Esophagus muscularis mucosa (tissue), 4 donors: ENCODE measurements at regions of chr14 and their contacts with region 1.

Region 1: DNA sequence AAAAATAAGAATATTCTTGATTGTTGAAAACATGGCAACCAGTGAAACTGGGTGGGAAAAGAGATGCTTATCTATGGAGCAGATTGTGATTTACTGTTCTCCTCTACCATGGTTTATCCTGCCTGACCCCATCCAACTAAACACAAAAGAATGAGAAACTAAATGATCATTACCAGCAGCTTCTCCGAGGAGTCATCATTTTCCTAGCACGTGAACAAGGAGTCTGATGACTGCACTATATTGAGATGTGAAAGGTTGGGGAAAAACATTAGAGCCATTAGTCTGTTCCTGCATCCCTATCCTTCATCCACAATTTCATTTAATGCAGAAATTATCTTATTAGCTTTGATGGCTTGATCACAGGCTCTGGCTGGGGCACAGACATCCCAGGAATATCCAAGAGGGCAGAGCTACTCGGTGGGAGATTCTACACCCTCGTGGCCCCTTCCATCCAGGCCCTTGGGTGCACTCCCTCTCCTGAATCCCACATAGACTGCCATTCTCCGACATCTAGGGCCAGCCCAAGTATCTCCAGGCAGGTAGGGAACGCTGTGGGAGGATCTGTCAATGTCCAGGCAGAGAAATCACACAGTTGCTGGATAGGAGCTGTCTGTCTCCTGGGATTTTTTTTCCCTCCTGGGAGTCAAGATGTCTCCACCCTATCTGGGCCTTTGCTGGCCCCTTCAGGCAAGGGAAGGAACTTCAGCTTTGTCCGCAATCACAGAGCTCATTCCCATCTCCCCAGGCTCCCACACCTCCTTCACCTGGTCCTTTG is 43.3 kb upstream of the DHRS4 start:
- DNase-seq: no peak
- H3K4me3 ChIP-seq: no peak overlapping the region
- H3K27ac ChIP-seq: no peak overlapping the region
- H3K4me1 ChIP-seq: peaks cover 0 to under 1% (median 0%) of the 10 kb centered on the region in 4 donors
- H3K27me3 ChIP-seq: no peaks in the 10 kb centered on the region
- CTCF ChIP-seq: peak; percentile 56 to 86 (median 61)
- EP300 ChIP-seq: no peak
- POLR2A ChIP-seq: no peak

Region 2: DNA sequence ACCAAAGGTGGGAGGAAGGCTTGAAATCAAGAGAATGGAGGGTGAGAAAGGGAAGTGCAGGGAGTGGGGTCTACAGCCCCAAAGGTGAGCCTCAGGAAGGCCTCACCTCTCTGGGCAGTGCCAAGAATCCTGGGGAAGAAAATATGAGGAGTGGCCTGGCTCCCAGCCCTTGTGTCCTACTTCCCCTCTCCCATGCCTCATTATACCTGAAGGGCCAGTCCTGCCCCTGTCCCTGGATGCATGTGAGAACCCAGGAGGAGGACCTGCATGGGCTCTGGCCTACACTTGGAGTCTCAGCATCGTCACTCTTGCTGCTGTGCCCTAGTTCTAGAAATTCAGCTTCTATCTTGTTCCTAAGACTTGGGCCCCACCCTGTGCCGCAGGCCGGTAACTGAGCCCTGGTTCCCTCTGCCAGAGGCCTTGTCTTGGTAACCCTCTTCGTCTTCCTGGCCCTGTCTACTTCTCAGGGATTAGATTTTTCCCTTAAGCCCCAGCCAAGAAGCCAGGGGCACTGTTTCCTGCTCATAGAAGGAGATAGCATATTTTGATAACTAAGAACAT is 463.9 kb before region 1 on chr14:
- intact Hi-C with region 1: no loop called
- DNase-seq: no peak
- H3K4me3 ChIP-seq: no peak overlapping the region
- H3K27ac ChIP-seq: no peak overlapping the region
- H3K4me1 ChIP-seq: peaks cover 0 to 8% (median 0%) of the 10 kb centered on the region in 4 donors
- H3K27me3 ChIP-seq: peaks cover 0 to 8% (median 0%) of the 10 kb centered on the region in 4 donors
- CTCF ChIP-seq: no peak
- EP300 ChIP-seq: no peak
- POLR2A ChIP-seq: no peak

Region 3: DNA sequence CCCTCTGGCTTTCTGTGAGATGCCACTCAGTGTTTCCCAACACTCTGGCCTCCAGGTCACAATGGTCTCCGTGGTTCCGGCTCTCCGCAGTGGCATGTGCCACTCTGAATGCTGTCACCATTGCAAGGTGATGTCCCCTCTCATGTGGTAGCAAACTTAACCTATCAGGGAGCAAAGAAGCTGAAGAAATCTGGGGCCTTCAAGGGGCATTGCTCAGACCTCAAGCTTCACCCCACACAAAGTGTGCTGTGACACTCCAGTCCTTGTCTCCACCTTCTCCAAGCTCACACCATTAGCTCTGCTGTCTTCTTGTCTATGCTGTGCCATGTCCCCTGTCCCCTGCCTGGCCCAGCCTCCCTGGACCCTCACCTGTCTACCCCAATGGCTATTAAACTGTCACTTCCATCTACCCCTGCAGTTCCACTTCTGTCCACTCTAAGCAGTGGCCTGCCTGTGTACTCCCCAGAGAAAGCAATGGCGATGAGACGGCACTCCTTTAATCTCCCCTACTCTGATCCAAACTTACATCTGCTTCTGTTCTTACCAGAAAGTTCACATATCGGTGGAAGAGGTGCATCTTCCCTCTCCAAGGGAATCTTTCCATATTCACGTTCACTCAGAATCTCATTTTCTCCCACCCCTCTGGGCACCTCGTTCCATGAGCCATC is 180.4 kb before region 1 on chr14:
- intact Hi-C with region 1: loop called (anchors 5 kb)
- DNase-seq: no peak
- H3K4me3 ChIP-seq: no peak overlapping the region
- H3K27ac ChIP-seq: no peak overlapping the region
- H3K4me1 ChIP-seq: no peaks in the 10 kb centered on the region
- H3K27me3 ChIP-seq: no peaks in the 10 kb centered on the region
- CTCF ChIP-seq: no peak
- EP300 ChIP-seq: no peak
- POLR2A ChIP-seq: no peak

Region 4: GRCh38 chr14:23866269-23866668 is 44.0 kb before region 1 on chr14:
- intact Hi-C with region 1: no loop called
- DNase-seq: no peak
- H3K4me3 ChIP-seq: no peak overlapping the region
- H3K27ac ChIP-seq: no peak overlapping the region
- H3K4me1 ChIP-seq: peaks cover 0 to 4% (median 0%) of the 10 kb centered on the region in 4 donors
- H3K27me3 ChIP-seq: no peaks in the 10 kb centered on the region
- CTCF ChIP-seq: no peak
- EP300 ChIP-seq: no peak
- POLR2A ChIP-seq: no peak

Region 5: GRCh38 chr14:23942387-23942986 is 32.2 kb after region 1 on chr14:
- intact Hi-C with region 1: no loop called
- DNase-seq: no peak
- H3K4me3 ChIP-seq: no peak overlapping the region
- H3K27ac ChIP-seq: no peak overlapping the region
- H3K4me1 ChIP-seq: no peaks in the 10 kb centered on the region
- H3K27me3 ChIP-seq: no peaks in the 10 kb centered on the region
- CTCF ChIP-seq: no peak
- EP300 ChIP-seq: no peak
- POLR2A ChIP-seq: no peak

Region 6: DNA sequence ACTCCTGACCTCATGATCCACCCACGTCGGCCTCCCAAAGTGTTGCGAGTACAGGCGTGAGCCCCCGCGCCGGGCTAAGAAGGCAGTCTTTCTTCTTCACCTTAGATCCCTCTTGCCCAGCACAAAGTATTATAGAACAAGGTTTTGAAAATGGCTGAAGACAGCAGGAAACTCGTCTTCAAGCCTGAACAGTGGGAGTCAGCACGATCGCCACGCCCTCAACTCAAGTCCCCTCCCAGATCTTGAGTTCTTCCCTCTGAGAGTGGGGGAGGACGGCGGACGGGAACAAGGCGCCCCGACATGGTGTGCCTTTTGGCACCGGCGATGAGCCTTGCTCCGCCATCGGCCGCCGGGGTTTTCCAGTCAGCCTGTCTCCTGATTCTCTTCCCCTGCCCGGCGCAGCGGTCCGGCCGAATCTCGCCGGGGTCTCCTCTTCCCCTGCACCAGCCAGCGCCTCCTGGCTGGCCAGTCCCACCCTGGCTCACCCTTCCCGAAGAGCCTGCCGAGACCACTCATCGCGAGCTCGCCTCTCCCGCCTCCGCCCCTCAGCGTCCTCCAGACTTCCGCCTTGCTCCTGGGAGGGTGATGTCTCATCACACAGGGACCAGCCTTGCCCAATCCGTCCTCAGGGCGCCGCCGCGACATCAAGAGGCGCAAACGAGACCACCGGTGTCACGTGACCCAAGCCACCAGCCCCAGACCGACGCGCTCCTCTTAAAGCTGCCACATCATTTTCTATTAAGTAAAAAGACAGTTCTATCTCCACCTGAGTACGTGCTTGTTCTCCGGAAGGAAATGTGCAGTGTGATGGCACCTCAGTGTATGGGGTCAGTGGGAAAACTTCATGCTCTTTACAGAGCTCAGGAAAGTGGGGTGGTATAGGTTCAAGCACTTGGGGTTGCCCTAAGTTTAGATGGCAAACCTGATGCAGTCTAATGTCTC is 302.9 kb after region 1 on chr14 and contains the start of gene CHMP4A:
- intact Hi-C with region 1: no loop called
- DNase-seq: peak; percentile 100
- H3K4me3 ChIP-seq: peak within 1 kb of the TSS; percentile 75 to 97 (median 81)
- H3K27ac ChIP-seq: peak within 1 kb of the TSS; percentile 92 to 99 (median 96)
- H3K4me1 ChIP-seq: peaks cover 26 to 56% (median 43%) of the 10 kb centered on the region in 4 donors
- H3K27me3 ChIP-seq: peaks cover 0 to 6% (median 0%) of the 10 kb centered on the region in 4 donors
- CTCF ChIP-seq: peak in 1 of 3 experiments; percentile 26
- EP300 ChIP-seq: no peak
- POLR2A ChIP-seq: peak; percentile 89
- total RNA-seq, gene CHMP4A: 75.4 to 135 (median 94.9) TPM